GM23248 (cell line): ENCODE measurements at regions of chr10 and their contacts with region 1.

Region 1: GRCh38 chr10:13792006-13792405 is 205.2 kb downstream of the PRPF18 start:
- DNase-seq: no peak
- H3K4me3 ChIP-seq: no peak overlapping the region
- H3K27ac ChIP-seq: no peak overlapping the region
- H3K4me1 ChIP-seq: peaks cover 16% of the 10 kb centered on the region
- H3K27me3 ChIP-seq: no peaks in the 10 kb centered on the region

Region 2: GRCh38 chr10:13956826-13957225 is 164.8 kb after region 1 on chr10:
- in situ Hi-C with region 1: loop called (anchors 10 kb)
- DNase-seq: peak; percentile 86
- H3K4me3 ChIP-seq: no peak overlapping the region
- H3K27ac ChIP-seq: peak overlapping the region; percentile 50
- H3K4me1 ChIP-seq: peaks cover 29% of the 10 kb centered on the region
- H3K27me3 ChIP-seq: no peaks in the 10 kb centered on the region

Region 3: GRCh38 chr10:14093730-14094484 is 301.9 kb after region 1 on chr10:
- in situ Hi-C with region 1: loop called (anchors 5 kb)
- DNase-seq: peak; percentile 74
- H3K4me3 ChIP-seq: no peak overlapping the region
- H3K27ac ChIP-seq: no peak overlapping the region
- H3K4me1 ChIP-seq: 0 out of 2 replicates have a peak, but pooled peaks cover 6% of the 10 kb centered on the region
- H3K27me3 ChIP-seq: no peaks in the 10 kb centered on the region

Region 4: GRCh38 chr10:14478604-14479003 is 686.6 kb after region 1 on chr10:
- in situ Hi-C with region 1: loop called (anchors 10 kb)
- DNase-seq: peak; percentile 78
- H3K4me3 ChIP-seq: no peak overlapping the region
- H3K27ac ChIP-seq: no peak overlapping the region
- H3K4me1 ChIP-seq: peaks cover 12% of the 10 kb centered on the region
- H3K27me3 ChIP-seq: peaks cover 38% of the 10 kb centered on the region

Region 5: DNA sequence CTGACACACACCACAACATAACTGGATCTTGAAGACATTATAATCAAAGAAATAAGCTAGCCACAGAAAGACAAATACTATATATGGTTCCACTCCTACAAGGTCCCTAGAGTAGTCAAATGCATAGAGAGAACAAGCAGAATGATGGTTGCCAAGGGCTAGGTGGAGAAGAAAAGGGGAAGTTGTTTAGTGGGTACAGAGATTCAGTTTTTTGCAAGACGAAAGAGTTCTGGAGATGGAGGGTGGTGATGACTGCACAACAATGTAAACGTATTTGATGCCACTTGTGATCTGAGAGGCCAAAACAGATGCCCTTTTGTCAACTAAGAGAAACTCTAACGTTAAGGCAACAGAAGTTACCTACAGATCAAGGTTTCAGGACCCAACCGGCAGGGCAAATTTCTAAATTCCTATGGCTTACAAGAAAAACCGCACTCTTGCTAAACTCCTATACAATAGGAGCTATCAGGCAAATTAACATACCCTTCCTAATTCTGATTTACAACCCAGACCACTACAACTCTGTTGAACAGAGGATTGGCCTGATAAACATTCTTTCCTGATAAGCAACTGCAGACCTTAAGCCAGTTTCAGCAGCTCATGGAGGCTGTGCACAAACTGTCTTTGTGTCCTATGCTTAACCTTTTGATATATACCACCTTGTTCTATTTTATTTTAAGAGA is 913.7 kb after region 1 on chr10:
- in situ Hi-C with region 1: no loop called
- DNase-seq: no peak
- H3K4me3 ChIP-seq: no peak overlapping the region
- H3K27ac ChIP-seq: no peak overlapping the region
- H3K4me1 ChIP-seq: no peaks in the 10 kb centered on the region
- H3K27me3 ChIP-seq: peaks cover 12% of the 10 kb centered on the region; the same call in 1 of the 2 replicates